Endothelial cell of umbilical vein (primary cell): ENCODE measurements at regions of chr22 and their contacts with region 1.

Region 1: DNA sequence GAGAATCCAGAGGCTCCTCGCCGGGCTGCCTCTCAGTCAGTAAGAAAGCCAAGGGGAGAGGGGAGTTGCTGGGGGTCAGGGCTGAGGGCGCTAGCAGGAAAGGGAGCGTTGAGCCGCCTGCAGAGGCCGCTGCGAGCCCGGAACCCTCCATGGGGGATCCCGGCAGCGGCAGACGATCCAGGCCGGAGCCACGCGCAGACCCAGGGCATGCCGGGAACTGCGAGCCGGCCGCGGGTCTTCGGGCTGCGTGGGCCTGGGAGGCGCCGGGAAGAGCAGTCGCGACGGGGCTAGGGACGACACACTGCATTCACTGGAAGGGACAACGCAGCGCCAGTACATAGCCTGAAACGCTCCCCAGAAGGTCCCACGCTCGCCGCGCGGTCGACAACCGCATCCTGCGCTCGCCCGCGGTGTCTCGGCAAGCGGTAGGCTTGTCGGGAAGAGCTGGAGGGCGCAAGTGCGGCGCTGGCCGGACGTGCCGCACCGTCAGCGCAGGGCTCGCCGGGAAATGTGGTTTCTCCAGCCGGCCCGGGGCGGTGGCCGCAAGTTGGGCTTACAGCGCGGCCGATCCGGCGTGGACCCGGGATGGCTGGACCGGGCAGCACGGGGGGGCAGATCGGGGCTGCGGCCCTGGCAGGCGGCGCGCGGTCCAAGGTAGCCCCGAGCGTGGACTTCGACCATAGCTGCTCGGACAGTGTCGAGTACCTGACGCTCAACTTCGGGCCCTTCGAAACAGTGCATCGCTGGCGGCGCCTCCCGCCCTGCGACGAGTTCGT is at the start of gene LZTR1:
- DNase-seq: peak; percentile 91
- H3K4me3 ChIP-seq: peak within 1 kb of the TSS; percentile 54 to 92 (median 65)
- H3K27ac ChIP-seq: peak within 1 kb of the TSS; percentile 62
- H3K4me1 ChIP-seq: peaks cover 17% of the 10 kb centered on the region
- H3K27me3 ChIP-seq: no peaks in the 10 kb centered on the region
- CTCF ChIP-seq: peak; percentile 67 to 82
- POLR2A ChIP-seq: peak; percentile 96
- total RNA-seq, gene LZTR1: 60.1 and 86.8 TPM in 2 replicates

Region 2: GRCh38 chr22:20916983-20917810 is 64.8 kb before region 1 on chr22 and contains the start of gene CRKL:
- CTCF ChIA-PET with region 1: interaction called, 10 read pairs
- POLR2A ChIA-PET with region 1: interaction called, 5 read pairs
- dilution Hi-C with region 1: no loop called
- intact Hi-C with region 1: no loop called
- DNase-seq: peak; percentile 97
- H3K4me3 ChIP-seq: peak within 1 kb of the TSS; percentile 69 to 100 (median 97)
- H3K27ac ChIP-seq: peak within 1 kb of the TSS; percentile 56
- H3K4me1 ChIP-seq: peaks cover 6% of the 10 kb centered on the region
- H3K27me3 ChIP-seq: no peaks in the 10 kb centered on the region
- CTCF ChIP-seq: peak; percentile 96 to 100
- POLR2A ChIP-seq: peak; percentile 80
- total RNA-seq, gene CRKL: 47.1 and 50.6 TPM in 2 replicates

Region 3: DNA sequence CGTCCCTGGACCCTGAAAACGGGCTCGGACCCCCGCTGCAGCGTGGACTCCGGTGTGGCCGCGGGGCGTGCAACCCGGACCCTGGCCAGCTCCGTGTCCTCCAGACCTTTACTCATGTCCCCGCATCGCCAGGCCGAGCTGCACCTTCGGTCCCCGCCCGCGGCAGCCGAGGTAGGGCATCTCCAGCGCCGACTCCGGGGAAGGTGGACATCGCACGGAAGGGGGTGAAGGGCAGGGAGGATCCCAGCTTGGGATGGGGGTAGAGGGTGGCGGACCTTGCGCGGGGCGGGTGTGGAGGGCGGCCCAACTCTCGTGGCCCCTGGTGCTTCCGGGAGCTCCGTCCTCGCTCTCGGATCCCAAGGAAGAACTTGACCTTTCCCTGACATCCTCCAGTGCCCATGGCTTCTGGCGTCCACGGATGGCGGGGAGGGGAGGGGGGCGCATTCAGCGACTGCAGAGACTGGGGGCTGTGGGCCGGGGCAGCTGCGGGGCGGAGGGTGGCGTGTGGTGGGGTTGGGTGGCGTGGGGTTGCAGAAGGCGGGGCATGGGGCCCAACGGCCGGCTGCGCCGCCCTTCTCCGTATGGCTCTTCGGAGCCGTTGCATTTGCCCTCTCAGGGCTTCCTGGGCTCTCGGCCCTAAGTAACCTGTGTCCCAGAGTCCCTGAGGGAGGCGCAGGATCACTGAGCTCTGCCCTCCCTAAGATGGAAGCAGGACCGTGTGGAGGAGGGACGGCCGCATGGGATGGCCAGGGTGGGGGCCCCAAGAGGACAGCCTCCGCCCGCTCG is 24.5 kb before region 1 on chr22:
- CTCF ChIA-PET with region 1: interaction called, 14 read pairs
- POLR2A ChIA-PET with region 1: no interaction called
- dilution Hi-C with region 1: no loop called
- intact Hi-C with region 1: no loop called
- DNase-seq: no peak
- H3K4me3 ChIP-seq: peak overlapping the region; percentile 7 to 45 (median 24)
- H3K27ac ChIP-seq: no peak overlapping the region
- H3K4me1 ChIP-seq: peaks cover 10% of the 10 kb centered on the region
- H3K27me3 ChIP-seq: peaks cover 0 to 5% of the 10 kb centered on the region in 2 experiments
- CTCF ChIP-seq: no peak
- POLR2A ChIP-seq: no peak

Region 4: DNA sequence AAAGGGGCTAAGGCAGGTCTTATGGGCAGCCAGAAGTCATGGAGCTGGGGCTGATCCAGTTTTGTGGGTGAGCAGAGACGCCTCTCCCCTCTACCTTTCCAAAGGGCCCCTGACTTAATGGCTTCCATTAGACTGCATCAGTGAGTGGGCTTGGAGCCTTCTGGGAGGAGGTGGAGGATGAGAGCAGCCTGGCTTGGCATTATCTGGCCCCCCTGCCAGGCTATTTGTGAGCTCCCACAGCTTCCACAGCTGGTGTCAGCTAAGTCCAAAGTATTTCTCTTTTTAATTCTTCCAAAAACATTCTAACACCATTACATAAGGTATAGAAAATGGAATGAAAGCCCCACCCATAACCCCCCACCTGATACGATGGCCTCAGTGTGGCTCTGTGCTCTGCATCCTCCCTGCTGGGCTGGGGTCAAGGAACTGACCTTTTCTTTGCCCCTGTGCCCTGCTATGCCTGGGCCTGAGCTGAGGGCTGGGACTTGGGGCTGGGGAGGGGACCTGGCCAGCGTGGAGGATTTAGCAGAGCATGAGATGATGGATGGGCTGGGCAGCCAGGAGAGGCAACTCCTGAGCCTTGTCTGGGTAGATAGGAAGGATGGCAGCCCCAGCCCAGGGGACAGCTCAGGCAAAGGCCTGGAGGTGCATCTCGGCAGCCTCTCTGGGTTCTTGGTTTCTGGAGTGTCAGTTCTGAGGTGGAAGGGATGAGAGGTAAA is 10.9 kb before region 1 on chr22:
- CTCF ChIA-PET with region 1: interaction called, 13 read pairs
- POLR2A ChIA-PET with region 1: interaction called, 3 read pairs
- dilution Hi-C with region 1: no loop called
- intact Hi-C with region 1: no loop called
- DNase-seq: no peak
- H3K4me3 ChIP-seq: no peak overlapping the region
- H3K27ac ChIP-seq: no peak overlapping the region
- H3K4me1 ChIP-seq: peaks cover 2% of the 10 kb centered on the region
- H3K27me3 ChIP-seq: peaks cover 0 to 2% of the 10 kb centered on the region in 2 experiments
- CTCF ChIP-seq: no peak
- POLR2A ChIP-seq: no peak

Region 5: GRCh38 chr22:21001560-21002325 is 19.8 kb after region 1 on chr22 and contains the start of gene THAP7:
- CTCF ChIA-PET with region 1: interaction called, 19 read pairs
- POLR2A ChIA-PET with region 1: interaction called, 10 read pairs
- dilution Hi-C with region 1: no loop called
- intact Hi-C with region 1: loop called (anchors 1 kb)
- DNase-seq: peak; percentile 95
- H3K4me3 ChIP-seq: peak within 1 kb of the TSS; percentile 77 to 86 (median 86)
- H3K27ac ChIP-seq: peak within 1 kb of the TSS; percentile 88
- H3K4me1 ChIP-seq: peaks cover 22% of the 10 kb centered on the region
- H3K27me3 ChIP-seq: no peaks in the 10 kb centered on the region
- CTCF ChIP-seq: no peak
- POLR2A ChIP-seq: peak; percentile 85
- total RNA-seq, gene THAP7: 13.5 and 14.9 TPM in 2 replicates

Region 6: DNA sequence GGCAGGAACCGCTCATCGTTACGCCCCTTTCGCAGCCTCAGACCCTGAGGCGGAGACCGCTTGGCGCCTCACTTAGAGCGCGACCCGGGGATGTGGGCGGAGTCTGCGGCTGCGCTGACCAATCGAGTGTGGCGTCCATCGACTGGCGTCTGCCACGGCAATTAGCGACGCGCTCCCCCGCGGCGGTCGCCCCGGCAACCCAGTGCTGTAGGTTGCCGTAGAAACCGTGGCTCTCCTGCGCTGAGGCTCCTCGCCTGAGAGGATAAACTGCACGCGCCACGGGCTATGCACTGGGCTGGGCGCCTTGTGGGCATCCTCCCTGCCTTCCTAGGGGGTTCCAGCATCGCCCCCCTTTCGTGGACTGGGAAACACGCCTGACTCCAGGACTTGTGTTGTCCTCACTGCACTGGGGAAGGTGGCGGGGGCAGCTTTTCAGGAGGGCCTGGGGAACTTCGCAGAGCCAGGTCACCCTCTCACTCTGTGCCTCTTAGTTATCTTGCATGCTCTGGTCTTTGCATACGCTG is 32.3 kb after region 1 on chr22:
- CTCF ChIA-PET with region 1: no interaction called
- POLR2A ChIA-PET with region 1: no interaction called
- dilution Hi-C with region 1: no loop called
- intact Hi-C with region 1: loop called (anchors 1 kb)
- DNase-seq: peak; percentile 91
- H3K4me3 ChIP-seq: peak overlapping the region; percentile 12 to 47 (median 43)
- H3K27ac ChIP-seq: peak overlapping the region; percentile 66
- H3K4me1 ChIP-seq: peaks cover 13% of the 10 kb centered on the region
- H3K27me3 ChIP-seq: no peaks in the 10 kb centered on the region
- CTCF ChIP-seq: no peak
- POLR2A ChIP-seq: no peak